Natural killer cell (primary cell): ENCODE measurements at regions of chr15 and their contacts with region 1.

Region 1: GRCh38 chr15:76139368-76140073 is 79.7 kb downstream of the TMEM266 start:
- DNase-seq: peak; percentile 60 to 79
- ATAC-seq: peak; percentile 84 to 98 (median 94)
- H3K4me3 ChIP-seq: no peak overlapping the region
- H3K4me3 Mint-ChIP-seq: no peak overlapping the region
- H3K27ac ChIP-seq: no peak overlapping the region
- H3K27ac Mint-ChIP-seq: no peak overlapping the region
- H3K4me1 ChIP-seq: no peaks in the 10 kb centered on the region
- H3K4me1 Mint-ChIP-seq: no peaks in the 10 kb centered on the region
- H3K27me3 ChIP-seq: no peaks in the 10 kb centered on the region
- H3K27me3 Mint-ChIP-seq: peaks cover 15 to 28% of the 10 kb centered on the region in 2 donors
- CTCF ChIP-seq: peak; percentile 82

Region 2: DNA sequence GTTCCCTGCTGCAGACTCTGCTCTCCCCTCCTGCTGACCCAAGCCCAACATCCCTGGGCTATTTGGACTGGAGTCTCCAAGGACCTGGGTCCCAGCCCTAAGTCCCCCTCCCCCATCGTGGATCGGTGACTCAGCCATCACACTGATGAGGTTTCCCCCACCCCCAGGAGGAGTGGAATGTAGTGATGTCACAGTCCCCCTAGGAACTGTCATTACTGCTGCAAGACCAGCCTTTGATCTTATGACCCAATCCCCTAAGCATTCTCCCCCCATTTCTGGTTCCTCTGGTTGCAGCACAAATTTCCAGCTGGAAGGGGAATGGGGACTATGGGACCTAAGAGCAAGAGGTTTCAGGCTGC is 363.5 kb before region 1 on chr15:
- intact Hi-C with region 1: no loop called
- DNase-seq: no peak
- ATAC-seq: no peak
- H3K4me3 ChIP-seq: no peak overlapping the region
- H3K4me3 Mint-ChIP-seq: no peak overlapping the region
- H3K27ac ChIP-seq: no peak overlapping the region
- H3K27ac Mint-ChIP-seq: no peak overlapping the region
- H3K4me1 ChIP-seq: peaks cover 4% of the 10 kb centered on the region
- H3K4me1 Mint-ChIP-seq: peaks cover 6 to 9% of the 10 kb centered on the region in 2 donors
- H3K27me3 ChIP-seq: no peaks in the 10 kb centered on the region
- H3K27me3 Mint-ChIP-seq: peaks cover 33% of the 10 kb centered on the region in 2 donors
- CTCF ChIP-seq: no peak

Region 3: DNA sequence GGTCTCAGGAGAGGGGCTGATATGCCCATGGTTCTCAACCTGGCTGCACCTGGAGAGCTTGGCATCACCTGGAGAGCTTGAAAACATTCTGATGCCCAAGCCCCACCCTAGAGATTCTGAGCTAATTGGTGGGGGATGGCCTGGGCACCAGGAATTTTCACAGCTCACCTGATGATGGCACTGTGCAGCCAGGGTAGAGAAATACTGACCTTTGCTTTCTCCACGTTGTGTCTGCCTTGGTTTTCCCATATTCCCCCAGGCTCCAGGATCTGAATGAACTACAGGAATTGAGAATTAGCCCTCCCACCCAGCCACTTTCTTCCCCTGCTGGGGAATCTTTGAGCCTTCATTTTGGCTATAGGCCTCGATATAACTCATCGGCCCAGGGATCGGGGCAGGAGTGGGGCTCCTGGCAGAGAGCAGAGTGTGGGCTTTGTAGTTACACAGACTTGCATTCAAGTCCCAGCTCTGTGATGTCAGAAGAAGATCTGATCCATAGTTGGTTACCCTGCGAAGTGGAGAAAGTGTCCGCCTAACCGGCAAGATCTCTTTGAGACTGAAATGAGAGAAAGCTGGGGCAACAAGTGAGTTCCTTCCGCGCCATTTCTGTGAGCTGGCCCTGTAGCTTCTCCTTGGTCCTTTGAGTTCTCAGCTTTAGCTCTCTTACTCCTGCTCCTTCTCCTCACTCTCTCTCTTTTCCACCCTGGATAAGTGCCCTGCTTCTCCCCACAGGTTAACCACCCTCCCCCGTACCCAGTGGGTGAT is 329.4 kb before region 1 on chr15:
- intact Hi-C with region 1: loop called (anchors 10 kb)
- DNase-seq: peak in 1 of 2 donors; percentile 42
- ATAC-seq: peak in 1 of 3 donors; percentile 50
- H3K4me3 ChIP-seq: no peak overlapping the region
- H3K4me3 Mint-ChIP-seq: no peak overlapping the region
- H3K27ac ChIP-seq: no peak overlapping the region
- H3K27ac Mint-ChIP-seq: no peak overlapping the region
- H3K4me1 ChIP-seq: no peaks in the 10 kb centered on the region
- H3K4me1 Mint-ChIP-seq: peaks cover 0 to 6% of the 10 kb centered on the region in 2 donors
- H3K27me3 ChIP-seq: no peaks in the 10 kb centered on the region
- H3K27me3 Mint-ChIP-seq: peaks cover 10 to 12% of the 10 kb centered on the region in 2 donors
- CTCF ChIP-seq: no peak

Region 4: DNA sequence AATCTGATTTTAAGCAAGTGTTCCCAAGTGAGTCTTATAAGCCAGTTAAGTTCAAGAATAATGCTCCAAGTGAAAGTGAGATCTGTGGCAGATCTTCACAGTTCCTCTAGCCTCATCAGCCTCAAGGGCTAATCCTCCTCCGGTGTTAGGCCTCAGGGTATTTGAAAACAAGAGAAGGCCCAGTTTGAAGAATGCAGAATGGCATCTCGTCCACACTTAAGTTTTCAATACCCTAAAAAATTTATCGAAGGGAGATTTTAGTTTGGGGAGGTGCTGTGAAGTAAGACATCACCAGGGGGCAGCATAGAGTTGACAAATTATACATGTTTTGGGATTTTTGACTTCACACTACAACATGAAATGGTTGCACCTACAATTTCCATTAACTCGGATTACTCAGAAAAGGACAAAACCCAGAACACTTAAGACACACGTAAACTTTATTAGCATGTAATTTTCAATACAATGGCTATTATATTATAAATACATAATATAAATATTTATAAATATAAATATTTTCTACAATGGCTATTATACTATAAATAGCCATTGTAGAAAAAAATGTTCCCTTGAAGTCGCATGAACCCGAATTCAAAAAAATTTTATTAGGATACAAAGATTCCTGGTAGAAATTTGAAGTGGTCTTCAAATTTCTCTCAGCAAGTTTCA is 82.1 kb before region 1 on chr15:
- intact Hi-C with region 1: loop called (anchors 1 kb)
- DNase-seq: peak in 1 of 2 donors; percentile 74
- ATAC-seq: peak in 1 of 3 donors; percentile 22
- H3K4me3 ChIP-seq: no peak overlapping the region
- H3K4me3 Mint-ChIP-seq: no peak overlapping the region
- H3K27ac ChIP-seq: no peak overlapping the region
- H3K27ac Mint-ChIP-seq: no peak overlapping the region
- H3K4me1 ChIP-seq: peaks cover 19% of the 10 kb centered on the region
- H3K4me1 Mint-ChIP-seq: peaks cover 13 to 19% of the 10 kb centered on the region in 2 donors
- H3K27me3 ChIP-seq: peaks cover 29% of the 10 kb centered on the region
- H3K27me3 Mint-ChIP-seq: peaks cover 41 to 44% of the 10 kb centered on the region in 2 donors
- CTCF ChIP-seq: peak; percentile 80